ENCODE measurements at regions of chr14 and their contacts with region 1.

Region 1: DNA sequence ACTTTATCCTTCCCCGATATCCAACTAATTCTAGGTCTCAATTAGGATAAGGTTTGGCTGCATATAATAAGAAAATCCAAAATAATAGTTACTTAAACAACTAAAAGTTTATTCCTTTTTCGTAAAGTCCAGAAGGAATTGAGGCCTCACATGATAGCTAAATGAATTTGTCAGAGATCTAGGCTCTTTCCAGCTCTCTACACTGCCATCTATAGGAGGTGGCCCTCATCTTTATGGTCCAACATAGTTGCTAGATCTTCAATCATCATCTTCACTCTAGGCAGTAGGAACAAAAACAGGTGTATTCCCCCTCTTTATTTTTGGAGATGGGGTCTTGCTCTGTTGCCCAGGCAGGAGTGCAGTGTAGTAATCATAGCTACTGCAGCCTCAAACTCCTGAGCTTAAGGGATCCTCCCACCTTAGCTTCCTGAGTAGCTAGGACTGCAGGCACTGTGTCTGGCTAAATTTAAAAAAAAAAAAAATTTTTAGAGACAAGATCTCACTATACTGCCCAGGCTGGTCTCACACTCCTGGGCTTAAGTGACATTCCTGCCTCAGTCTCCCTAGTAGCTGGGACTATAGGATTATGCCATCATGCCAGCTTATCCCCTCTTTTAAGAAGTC is 46.5 kb upstream of the SAV1 start:
- DNase-seq: peak; percentile 67
- ATAC-seq: peak; percentile 61
- H3K4me3 ChIP-seq: no peak overlapping the region
- H3K4me3 Mint-ChIP-seq: no peak overlapping the region
- H3K27ac ChIP-seq: no peak overlapping the region
- H3K27ac Mint-ChIP-seq: no peak overlapping the region
- H3K4me1 ChIP-seq: no peaks in the 10 kb centered on the region
- H3K4me1 Mint-ChIP-seq: no peaks in the 10 kb centered on the region
- H3K27me3 ChIP-seq: no peaks in the 10 kb centered on the region
- H3K27me3 Mint-ChIP-seq: no peaks in the 10 kb centered on the region
- CTCF ChIP-seq: peak; percentile 74

Region 2: DNA sequence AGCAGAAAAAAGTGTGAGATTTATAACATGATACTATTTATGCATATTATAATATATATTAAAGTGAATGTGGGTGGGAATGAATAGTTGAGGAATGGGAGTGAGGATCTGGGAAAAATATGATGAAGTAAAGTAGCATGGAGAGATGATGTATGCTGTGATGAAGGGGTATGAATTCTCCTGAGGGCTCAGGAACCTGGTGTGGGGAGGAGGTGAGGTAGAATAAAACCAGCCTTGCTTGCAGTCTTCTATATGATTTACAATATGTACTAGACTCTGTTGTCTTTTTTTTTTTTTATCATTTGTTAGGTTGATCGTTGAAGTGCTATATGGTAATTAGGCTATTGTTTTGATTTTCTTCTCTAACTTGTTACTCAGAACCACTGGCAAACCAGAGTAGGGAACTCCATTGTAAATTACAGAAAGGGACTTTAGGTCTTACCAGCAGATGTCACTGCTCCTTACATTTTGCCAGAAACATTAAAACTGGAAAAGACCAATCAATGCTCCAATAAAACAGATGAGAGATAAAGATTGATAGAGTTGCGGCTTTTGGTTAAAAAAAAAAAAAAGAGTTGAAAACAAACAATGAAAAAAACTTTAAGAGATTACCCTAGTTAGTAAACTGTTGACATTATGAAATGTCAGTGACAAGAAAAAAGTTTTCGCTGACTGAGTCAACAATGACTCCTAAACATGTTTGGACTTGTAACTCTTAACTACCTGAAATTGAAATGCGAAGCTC is 114.7 kb before region 1 on chr14:
- CTCF ChIA-PET with region 1: interaction called, 37 read pairs
- POLR2A ChIA-PET with region 1: no interaction called
- intact Hi-C with region 1: loop called (anchors 1 kb)
- DNase-seq: peak; percentile 46
- ATAC-seq: no peak
- H3K4me3 ChIP-seq: no peak overlapping the region
- H3K4me3 Mint-ChIP-seq: no peak overlapping the region
- H3K27ac ChIP-seq: no peak overlapping the region
- H3K27ac Mint-ChIP-seq: no peak overlapping the region
- H3K4me1 ChIP-seq: no peaks in the 10 kb centered on the region
- H3K4me1 Mint-ChIP-seq: no peaks in the 10 kb centered on the region
- H3K27me3 ChIP-seq: no peaks in the 10 kb centered on the region
- H3K27me3 Mint-ChIP-seq: no peaks in the 10 kb centered on the region
- CTCF ChIP-seq: peak; percentile 50

Region 3: GRCh38 chr14:50631408-50631821 is 83.1 kb before region 1 on chr14:
- CTCF ChIA-PET with region 1: interaction called, 13 read pairs
- POLR2A ChIA-PET with region 1: interaction called, 3 read pairs
- intact Hi-C with region 1: no loop called
- DNase-seq: no peak
- ATAC-seq: no peak
- H3K4me3 ChIP-seq: no peak overlapping the region
- H3K4me3 Mint-ChIP-seq: no peak overlapping the region
- H3K27ac ChIP-seq: peak overlapping the region in 1 of 2 donors; percentile 30
- H3K27ac Mint-ChIP-seq: no peak overlapping the region
- H3K4me1 ChIP-seq: no peaks in the 10 kb centered on the region
- H3K4me1 Mint-ChIP-seq: no peaks in the 10 kb centered on the region
- H3K27me3 ChIP-seq: no peaks in the 10 kb centered on the region
- H3K27me3 Mint-ChIP-seq: no peaks in the 10 kb centered on the region
- CTCF ChIP-seq: no peak

Region 4: DNA sequence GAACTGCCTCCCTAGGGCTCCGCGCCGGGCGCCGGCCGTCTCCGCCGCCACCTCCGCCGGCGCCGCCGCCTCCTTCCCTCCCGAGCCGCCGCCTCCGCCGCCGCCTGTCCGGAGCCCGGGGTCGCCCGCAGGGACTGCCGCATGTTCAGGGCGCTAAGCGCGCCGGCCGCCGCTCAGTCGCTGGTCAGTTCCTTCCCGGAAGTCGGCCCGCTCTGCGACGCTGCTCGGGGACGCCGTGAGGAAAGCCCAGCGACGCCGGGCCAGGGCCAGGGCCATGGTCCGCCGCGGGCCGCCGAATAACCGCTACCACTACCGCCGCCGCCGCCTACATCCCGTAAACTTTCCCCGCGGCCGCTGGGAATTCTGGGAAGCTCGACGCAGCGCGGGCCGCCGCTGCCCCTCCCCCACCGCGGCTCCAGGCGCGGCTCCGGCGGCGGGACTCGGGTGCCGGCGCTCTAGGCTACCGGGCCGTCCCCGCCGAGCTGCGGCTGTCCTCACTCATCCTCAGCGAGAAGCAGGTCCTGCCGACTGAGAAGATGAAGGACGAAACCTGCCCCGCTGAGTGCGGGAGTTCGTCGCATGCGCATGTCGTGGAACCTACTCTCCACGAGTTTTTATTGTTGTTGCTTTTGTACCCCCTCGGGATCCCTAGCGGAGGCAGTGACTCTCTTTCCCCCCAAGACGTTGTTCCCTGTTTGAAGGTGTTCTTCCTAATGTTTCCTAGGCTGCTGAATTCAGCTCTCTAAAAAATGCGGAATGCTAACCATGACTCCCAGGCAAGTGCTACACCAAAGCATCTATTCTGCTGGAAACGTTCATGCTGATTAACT is 46.4 kb before region 1 on chr14 and contains the start of gene SAV1:
- CTCF ChIA-PET with region 1: interaction called, 6 read pairs
- POLR2A ChIA-PET with region 1: no interaction called
- intact Hi-C with region 1: loop called (anchors 5 kb)
- DNase-seq: peak; percentile 80
- ATAC-seq: peak; percentile 63
- H3K4me3 ChIP-seq: peak within 1 kb of the TSS; percentile 47 to 93 (median 70)
- H3K4me3 Mint-ChIP-seq: no peak within 1 kb of the TSS
- H3K27ac ChIP-seq: peak within 1 kb of the TSS; percentile 83 to 91
- H3K27ac Mint-ChIP-seq: no peak within 1 kb of the TSS
- H3K4me1 ChIP-seq: peaks cover 22 to 42% of the 10 kb centered on the region in 2 donors
- H3K4me1 Mint-ChIP-seq: peaks cover 26% of the 10 kb centered on the region
- H3K27me3 ChIP-seq: no peaks in the 10 kb centered on the region
- H3K27me3 Mint-ChIP-seq: no peaks in the 10 kb centered on the region
- CTCF ChIP-seq: no peak
- total RNA-seq, gene SAV1: 36.1 and 39.7 TPM in 2 replicates

Region 5: DNA sequence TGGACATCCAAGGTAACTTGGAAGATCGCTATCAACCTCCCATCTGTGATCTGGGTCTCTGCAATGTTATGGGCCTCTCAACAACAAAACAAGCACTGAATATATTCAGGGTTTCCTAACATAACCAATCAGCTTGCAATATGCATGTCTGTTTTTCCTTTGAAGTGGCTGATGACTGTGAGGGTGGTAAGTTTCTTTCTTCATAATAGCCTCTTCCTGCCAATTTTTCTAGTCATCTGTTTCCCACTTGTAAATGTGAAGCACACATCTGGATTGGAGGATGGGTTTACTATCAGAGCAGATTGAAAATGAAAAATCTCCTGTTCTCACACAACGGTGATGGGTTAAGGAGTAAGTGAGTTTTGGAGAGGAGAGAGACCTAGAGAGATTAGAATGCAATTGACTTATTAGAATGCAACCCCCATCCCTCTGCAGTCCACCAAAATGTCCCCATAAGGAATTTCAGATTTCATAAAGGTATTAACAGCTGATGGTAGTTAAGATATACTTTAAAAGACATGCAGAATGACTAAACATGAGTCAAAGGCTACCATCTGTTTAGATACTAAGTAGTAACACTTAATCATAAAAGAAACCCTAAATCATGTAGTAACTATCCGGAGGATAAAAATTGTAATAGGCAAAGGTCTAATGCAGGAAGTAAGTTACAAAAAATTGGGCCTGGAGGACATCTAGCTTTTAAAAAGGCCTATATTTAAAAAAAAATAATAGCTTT is 12.0 kb after region 1 on chr14:
- CTCF ChIA-PET with region 1: interaction called, 18 read pairs
- POLR2A ChIA-PET with region 1: no interaction called
- intact Hi-C with region 1: no loop called
- DNase-seq: no peak
- ATAC-seq: no peak
- H3K4me3 ChIP-seq: no peak overlapping the region
- H3K4me3 Mint-ChIP-seq: no peak overlapping the region
- H3K27ac ChIP-seq: no peak overlapping the region
- H3K27ac Mint-ChIP-seq: no peak overlapping the region
- H3K4me1 ChIP-seq: no peaks in the 10 kb centered on the region
- H3K4me1 Mint-ChIP-seq: no peaks in the 10 kb centered on the region
- H3K27me3 ChIP-seq: no peaks in the 10 kb centered on the region
- H3K27me3 Mint-ChIP-seq: no peaks in the 10 kb centered on the region
- CTCF ChIP-seq: no peak

Region 6: GRCh38 chr14:50778721-50779483 is 64.3 kb after region 1 on chr14:
- CTCF ChIA-PET with region 1: interaction called, 14 read pairs
- POLR2A ChIA-PET with region 1: no interaction called
- intact Hi-C with region 1: no loop called
- DNase-seq: no peak
- ATAC-seq: no peak
- H3K4me3 ChIP-seq: no peak overlapping the region
- H3K4me3 Mint-ChIP-seq: no peak overlapping the region
- H3K27ac ChIP-seq: no peak overlapping the region
- H3K27ac Mint-ChIP-seq: peak overlapping the region; percentile 62
- H3K4me1 ChIP-seq: peaks cover 18 to 20% of the 10 kb centered on the region in 2 donors
- H3K4me1 Mint-ChIP-seq: peaks cover 24% of the 10 kb centered on the region
- H3K27me3 ChIP-seq: no peaks in the 10 kb centered on the region
- H3K27me3 Mint-ChIP-seq: no peaks in the 10 kb centered on the region
- CTCF ChIP-seq: no peak

Measured in B cell (primary cell).